Esophagus muscularis mucosa (tissue), 4 donors: ENCODE measurements at regions of chr3 and their contacts with region 1.

Region 1: GRCh38 chr3:44729384-44729910 is at the start of gene ZNF501:
- DNase-seq: peak; percentile 98
- H3K4me3 ChIP-seq: peak within 1 kb of the TSS; percentile 64 to 85 (median 82)
- H3K27ac ChIP-seq: peak within 1 kb of the TSS; percentile 44 to 78 (median 69)
- H3K4me1 ChIP-seq: peaks cover 0 to 17% (median 16%) of the 10 kb centered on the region in 4 donors
- H3K27me3 ChIP-seq: no peaks in the 10 kb centered on the region
- CTCF ChIP-seq: peak in 1 of 3 experiments; percentile 5
- EP300 ChIP-seq: no peak
- POLR2A ChIP-seq: no peak
- total RNA-seq, gene ZNF501: 5.1 to 9.9 (median 6.9) TPM

Region 2: DNA sequence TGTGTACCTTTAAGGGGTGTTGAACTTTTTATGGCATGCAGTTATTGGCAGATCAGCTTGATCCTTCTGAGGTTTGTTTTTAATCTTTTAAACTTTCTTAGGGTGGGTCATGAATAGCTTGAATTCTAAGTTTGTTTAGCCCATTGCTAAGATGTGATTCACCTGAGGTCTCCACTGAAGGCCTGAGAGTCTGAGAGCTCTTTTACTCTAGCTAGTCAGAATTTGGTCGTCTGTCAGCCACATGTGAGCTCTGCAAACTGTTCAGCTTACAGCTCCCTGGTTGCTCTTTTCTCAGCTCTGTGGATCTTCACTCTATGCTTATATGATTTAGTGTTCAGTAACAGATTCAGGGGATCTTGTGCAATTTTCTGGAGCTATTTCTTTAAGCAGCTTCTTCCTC is 877.4 kb before region 1 on chr3:
- intact Hi-C with region 1: no loop called
- DNase-seq: no peak
- H3K4me3 ChIP-seq: no peak overlapping the region
- H3K27ac ChIP-seq: no peak overlapping the region
- H3K4me1 ChIP-seq: no peaks in the 10 kb centered on the region
- H3K27me3 ChIP-seq: peaks cover 0 to 25% (median 0%) of the 10 kb centered on the region in 4 donors
- CTCF ChIP-seq: no peak
- EP300 ChIP-seq: no peak
- POLR2A ChIP-seq: no peak

Region 3: GRCh38 chr3:44648564-44649229 is 80.8 kb before region 1 on chr3 and contains the start of gene ZNF35:
- intact Hi-C with region 1: loop called (anchors 10 kb)
- DNase-seq: peak; percentile 94
- H3K4me3 ChIP-seq: peak within 1 kb of the TSS; percentile 81 to 92 (median 86)
- H3K27ac ChIP-seq: peak within 1 kb of the TSS; percentile 71 to 83 (median 73)
- H3K4me1 ChIP-seq: peaks cover 8 to 19% (median 13%) of the 10 kb centered on the region in 4 donors
- H3K27me3 ChIP-seq: no peaks in the 10 kb centered on the region
- CTCF ChIP-seq: no peak
- EP300 ChIP-seq: no peak
- POLR2A ChIP-seq: no peak
- total RNA-seq, gene ZNF35: 11.1 to 21.2 (median 16.7) TPM

Region 4: DNA sequence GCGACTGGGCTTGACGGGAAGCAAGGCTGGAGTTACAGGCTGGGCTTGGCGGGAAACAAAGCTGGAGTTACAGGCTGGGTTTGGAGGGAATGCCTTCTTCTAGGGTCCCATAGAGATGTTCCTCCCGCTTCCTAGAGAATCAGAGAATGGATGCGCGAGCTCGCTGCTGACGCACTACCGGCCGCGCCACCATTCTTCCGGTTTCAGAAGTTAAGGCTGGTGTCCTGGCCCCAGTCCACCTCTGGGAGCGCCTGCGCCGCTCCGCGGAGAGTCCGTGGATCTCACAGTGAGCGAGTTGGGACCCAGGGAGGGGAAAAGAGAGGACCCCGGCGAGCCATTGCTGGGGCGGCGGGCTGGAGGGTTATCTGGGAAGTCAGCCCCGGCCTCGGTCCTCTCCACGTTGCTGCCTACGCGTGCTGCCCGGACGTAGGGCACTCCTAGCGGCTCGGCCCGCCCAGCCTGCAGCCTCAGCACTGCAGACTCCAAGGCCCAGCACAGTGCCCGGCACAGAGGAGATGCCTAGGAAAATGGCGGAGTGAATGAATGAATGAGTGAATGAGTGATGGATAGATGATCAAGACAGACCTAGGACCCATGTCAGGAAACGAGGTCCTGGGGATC is 16.9 kb before region 1 on chr3 and contains the start of gene ZNF502:
- intact Hi-C with region 1: loop called (anchors 1 kb)
- DNase-seq: peak; percentile 95
- H3K4me3 ChIP-seq: peak within 1 kb of the TSS; percentile 79 to 92 (median 85)
- H3K27ac ChIP-seq: peak within 1 kb of the TSS; percentile 76 to 86 (median 80)
- H3K4me1 ChIP-seq: peaks cover 5 to 15% (median 10%) of the 10 kb centered on the region in 4 donors
- H3K27me3 ChIP-seq: peaks cover 0 to 18% (median 0%) of the 10 kb centered on the region in 4 donors
- CTCF ChIP-seq: peak; percentile 33 to 45 (median 41)
- EP300 ChIP-seq: no peak
- POLR2A ChIP-seq: no peak
- total RNA-seq, gene ZNF502: 3.2 to 5.8 (median 5.4) TPM

Region 5: DNA sequence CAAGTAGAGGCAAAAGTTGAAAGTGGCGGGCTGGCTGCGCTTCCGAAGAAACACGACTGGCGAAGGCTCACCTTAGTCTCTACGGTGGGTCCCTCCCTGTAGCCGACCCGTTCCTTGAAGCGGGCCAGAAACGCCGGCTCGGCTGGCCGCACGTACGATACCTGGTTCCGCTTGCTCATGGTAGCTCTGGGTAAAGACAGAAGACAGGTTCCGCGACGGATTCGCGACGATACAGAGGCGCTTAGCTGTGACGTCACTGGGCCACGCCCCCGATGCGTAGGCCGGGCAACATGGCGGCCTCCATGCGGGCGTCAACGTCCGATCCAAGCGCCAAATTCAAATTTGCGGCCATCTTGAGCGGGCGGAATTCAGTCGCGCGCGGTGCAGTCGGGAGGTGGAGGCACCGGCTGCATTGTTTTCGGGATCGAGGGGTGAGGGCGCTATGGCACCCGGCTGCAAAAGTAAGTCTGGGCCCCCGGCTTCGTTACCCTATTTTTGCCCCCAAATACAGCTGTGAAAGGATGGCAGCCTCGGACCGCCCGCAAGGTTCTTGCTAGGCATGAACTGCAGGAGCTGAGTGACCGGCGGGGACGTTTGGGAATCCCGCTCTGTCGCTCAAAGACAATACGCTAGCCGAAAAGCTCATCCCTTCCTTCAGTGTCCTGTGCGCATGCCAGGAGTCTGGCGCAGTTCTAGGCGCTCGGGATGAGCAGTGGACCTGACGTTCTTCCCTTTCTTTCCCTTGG is 32.1 kb after region 1 on chr3 and contains the starts of genes KIAA1143 and KIF15:
- intact Hi-C with region 1: loop called (anchors 2 kb)
- DNase-seq: peak; percentile 98
- H3K4me3 ChIP-seq: peak within 1 kb of the TSS; percentile 64 to 89 (median 81)
- H3K27ac ChIP-seq: peak within 1 kb of the TSS; percentile 72 to 82 (median 76)
- H3K4me1 ChIP-seq: peaks cover 17 to 23% (median 19%) of the 10 kb centered on the region in 4 donors
- H3K27me3 ChIP-seq: no peaks in the 10 kb centered on the region
- CTCF ChIP-seq: no peak
- EP300 ChIP-seq: no peak
- POLR2A ChIP-seq: no peak
- total RNA-seq, gene KIAA1143: 26.2 to 33.9 (median 28.2) TPM
- total RNA-seq, gene KIF15: 0.26 to 1.2 (median 0.54) TPM